ENCODE measurements at regions of chr4 and their contacts with region 1.

Region 1: GRCh38 chr4:154551872-154552686 is 1.9 kb upstream of the PLRG1 start:
- DNase-seq: peak; percentile 82
- ATAC-seq: peak; percentile 65
- H3K4me3 ChIP-seq: no peak overlapping the region
- H3K27ac ChIP-seq: no peak overlapping the region
- H3K4me1 ChIP-seq: no peaks in the 10 kb centered on the region
- H3K27me3 ChIP-seq: no peaks in the 10 kb centered on the region; the same call in 1 of the 2 replicates
- CTCF ChIP-seq: peak; percentile 86
- POLR2A ChIP-seq: no peak
- RAD21 ChIP-seq: peak; percentile 82

Region 2: GRCh38 chr4:154590329-154591006 is 38.4 kb after region 1 on chr4 and contains the start of gene FGA:
- CTCF ChIA-PET with region 1: no interaction called
- POLR2A ChIA-PET with region 1: no interaction called
- dilution Hi-C with region 1: no loop called
- in situ Hi-C with region 1: no loop called
- intact Hi-C with region 1: no loop called
- DNase-seq: no peak
- ATAC-seq: no peak
- H3K4me3 ChIP-seq: no peak within 1 kb of the TSS
- H3K27ac ChIP-seq: no peak within 1 kb of the TSS
- H3K4me1 ChIP-seq: no peaks in the 10 kb centered on the region
- H3K27me3 ChIP-seq: no peaks in the 10 kb centered on the region
- CTCF ChIP-seq: no peak
- POLR2A ChIP-seq: no peak
- RAD21 ChIP-seq: no peak
- total RNA-seq, gene FGA: not detected in 2 replicates

Region 3: GRCh38 chr4:154618708-154619315 is 66.7 kb after region 1 on chr4:
- CTCF ChIA-PET with region 1: interaction called, 20 read pairs
- POLR2A ChIA-PET with region 1: no interaction called
- dilution Hi-C with region 1: no loop called
- in situ Hi-C with region 1: loop called (anchors 5 kb)
- intact Hi-C with region 1: loop called (anchors 1 kb)
- DNase-seq: peak; percentile 30
- ATAC-seq: peak; percentile 79
- H3K4me3 ChIP-seq: no peak overlapping the region
- H3K27ac ChIP-seq: no peak overlapping the region
- H3K4me1 ChIP-seq: no peaks in the 10 kb centered on the region
- H3K27me3 ChIP-seq: no peaks in the 10 kb centered on the region
- CTCF ChIP-seq: peak; percentile 68
- POLR2A ChIP-seq: no peak
- RAD21 ChIP-seq: peak; percentile 56

Region 4: DNA sequence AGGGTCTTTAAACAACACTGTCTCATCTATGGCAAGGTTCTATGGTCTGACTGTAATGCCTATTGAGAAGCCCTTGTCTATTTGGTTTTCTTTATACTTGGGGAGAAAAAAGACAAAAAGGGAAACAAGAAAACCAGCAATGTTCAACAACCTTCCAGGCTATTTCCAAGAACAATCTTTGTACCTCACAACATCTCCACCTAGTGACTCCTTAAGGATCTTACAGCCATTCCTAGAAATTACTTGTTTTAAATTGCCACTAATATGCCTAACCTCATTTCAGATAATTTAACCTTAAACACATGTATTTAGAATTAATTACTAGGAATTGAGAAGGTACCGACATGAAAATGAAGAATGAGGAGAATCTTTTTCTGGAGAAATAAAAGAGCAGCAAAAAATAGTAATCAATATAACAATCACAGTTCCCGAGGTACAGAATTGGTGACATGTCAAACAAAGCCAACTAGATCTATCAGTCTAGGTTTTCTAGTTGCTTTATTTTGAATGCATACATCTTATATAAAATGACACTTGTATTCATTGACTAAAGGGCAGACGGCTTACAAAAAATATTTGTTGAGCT is 227.4 kb after region 1 on chr4:
- CTCF ChIA-PET with region 1: no interaction called
- POLR2A ChIA-PET with region 1: no interaction called
- dilution Hi-C with region 1: no loop called
- in situ Hi-C with region 1: loop called (anchors 10 kb)
- intact Hi-C with region 1: loop called (anchors 1 kb)
- DNase-seq: peak; percentile 39
- ATAC-seq: peak; percentile 61
- H3K4me3 ChIP-seq: no peak overlapping the region
- H3K27ac ChIP-seq: no peak overlapping the region
- H3K4me1 ChIP-seq: no peaks in the 10 kb centered on the region
- H3K27me3 ChIP-seq: no peaks in the 10 kb centered on the region
- CTCF ChIP-seq: peak; percentile 56
- POLR2A ChIP-seq: no peak
- RAD21 ChIP-seq: peak; percentile 44; the same call in 1 of the 2 replicates

Region 5: GRCh38 chr4:154928640-154929257 is 376.7 kb after region 1 on chr4:
- CTCF ChIA-PET with region 1: no interaction called
- POLR2A ChIA-PET with region 1: no interaction called
- dilution Hi-C with region 1: no loop called
- in situ Hi-C with region 1: no loop called
- intact Hi-C with region 1: loop called (anchors 10 kb)
- DNase-seq: peak; percentile 55
- ATAC-seq: peak; percentile 70
- H3K4me3 ChIP-seq: no peak overlapping the region
- H3K27ac ChIP-seq: no peak overlapping the region
- H3K4me1 ChIP-seq: no peaks in the 10 kb centered on the region
- H3K27me3 ChIP-seq: no peaks in the 10 kb centered on the region
- CTCF ChIP-seq: peak; percentile 68
- POLR2A ChIP-seq: no peak
- RAD21 ChIP-seq: peak; percentile 67

Region 6: DNA sequence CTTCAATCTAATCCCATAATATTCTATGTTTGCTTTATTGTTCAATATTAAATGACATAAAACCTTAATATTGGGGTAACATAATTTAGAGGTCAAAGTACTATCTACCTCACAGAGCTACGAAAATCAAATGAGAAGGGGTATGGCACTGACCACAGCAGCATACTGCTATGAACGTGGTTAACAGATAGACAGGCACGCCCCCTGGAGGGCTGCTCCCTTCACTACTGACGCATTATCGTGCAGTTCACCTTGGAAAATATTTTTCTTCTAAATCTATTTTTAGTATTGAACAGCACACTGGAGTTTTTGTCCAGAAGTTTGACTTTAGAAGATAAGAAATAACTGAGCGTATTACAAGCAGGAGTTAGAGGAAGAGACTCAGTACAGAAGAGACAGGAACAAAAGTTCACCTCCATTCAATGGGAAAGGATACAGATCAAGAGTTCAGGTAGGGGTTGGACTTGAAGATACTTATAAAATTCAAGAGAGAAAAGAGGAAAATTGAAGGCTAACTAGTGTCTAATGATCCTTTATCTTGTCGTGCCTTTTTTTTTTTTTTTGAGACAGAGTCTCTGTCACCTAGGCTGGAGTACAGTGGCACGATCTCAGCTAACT is 802.0 kb after region 1 on chr4:
- CTCF ChIA-PET with region 1: no interaction called
- POLR2A ChIA-PET with region 1: no interaction called
- dilution Hi-C with region 1: no loop called
- in situ Hi-C with region 1: loop called (anchors 25 kb)
- intact Hi-C with region 1: no loop called
- DNase-seq: peak; percentile 46
- ATAC-seq: peak; percentile 95
- H3K4me3 ChIP-seq: no peak overlapping the region
- H3K27ac ChIP-seq: no peak overlapping the region
- H3K4me1 ChIP-seq: no peaks in the 10 kb centered on the region
- H3K27me3 ChIP-seq: no peaks in the 10 kb centered on the region
- CTCF ChIP-seq: peak; percentile 68
- POLR2A ChIP-seq: no peak
- RAD21 ChIP-seq: peak; percentile 65